Breast epithelium (tissue), 4 donors: ENCODE measurements at regions of chr12 and their contacts with region 1.

Region 1: DNA sequence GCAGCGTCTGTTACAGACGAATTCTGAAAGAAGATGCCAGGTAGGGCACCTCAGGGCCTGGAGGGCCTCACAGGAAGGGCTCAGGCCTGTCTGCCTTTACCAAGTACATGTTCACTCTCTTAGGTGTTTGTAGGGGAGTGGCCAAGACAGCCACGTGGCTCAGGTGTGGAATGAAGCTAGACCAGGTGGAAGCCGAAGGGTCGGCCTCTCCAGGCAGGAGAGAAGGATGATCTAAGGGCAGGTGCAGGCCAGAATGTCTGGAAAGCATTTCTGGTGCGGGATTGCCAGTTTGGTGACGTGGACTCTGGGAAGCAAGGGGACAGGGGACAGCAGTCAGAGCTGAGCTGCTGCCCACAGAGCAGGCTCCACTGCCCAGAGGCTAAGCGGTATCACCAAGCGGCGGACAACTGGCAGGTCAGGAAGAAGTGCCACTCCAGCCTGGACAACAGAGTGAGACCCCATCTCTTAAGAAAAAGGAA is 32.0 kb upstream of the MMP17 start:
- DNase-seq: peak in 1 of 2 donors; percentile 28
- H3K4me3 ChIP-seq: no peak overlapping the region
- H3K27ac ChIP-seq: no peak overlapping the region
- H3K4me1 ChIP-seq: no peaks in the 10 kb centered on the region
- H3K27me3 ChIP-seq: no peaks in the 10 kb centered on the region
- CTCF ChIP-seq: no peak
- POLR2A ChIP-seq: no peak

Region 2: DNA sequence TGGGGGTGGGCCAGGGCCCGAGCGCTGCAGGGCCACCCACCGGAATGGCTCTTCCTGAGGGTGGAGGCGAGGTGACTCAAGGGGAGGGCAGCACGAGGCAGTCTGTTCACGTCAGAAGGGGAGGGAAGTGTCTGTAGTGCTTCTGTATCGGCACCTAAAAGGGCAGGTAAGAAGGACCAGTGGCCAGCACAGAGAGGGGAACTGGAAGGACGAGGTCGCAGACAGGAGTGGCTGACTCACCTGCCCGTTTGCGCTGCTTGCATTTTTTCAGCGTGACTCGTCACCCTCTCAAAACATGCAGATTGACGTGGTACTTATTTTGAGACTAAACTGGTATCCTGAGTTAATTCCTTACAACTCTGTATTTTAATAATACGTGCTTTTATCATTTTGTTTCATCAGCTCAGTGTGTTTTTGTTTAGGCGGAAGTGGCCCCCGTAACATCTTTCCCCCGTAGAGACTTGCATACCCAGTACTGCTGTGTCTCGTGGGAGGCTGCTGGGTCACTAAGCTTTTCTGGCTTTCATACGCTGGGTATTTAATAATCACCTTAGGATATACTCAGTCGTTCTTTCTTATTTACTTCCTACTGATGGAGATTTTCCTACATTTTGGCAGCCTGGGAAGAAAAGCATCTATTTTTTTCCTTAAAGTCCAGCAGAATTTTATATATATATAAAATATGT is 58.9 kb before region 1 on chr12:
- intact Hi-C with region 1: no loop called
- DNase-seq: peak in 1 of 2 donors; percentile 63
- H3K4me3 ChIP-seq: no peak overlapping the region
- H3K27ac ChIP-seq: peak overlapping the region; percentile 41 to 44
- H3K4me1 ChIP-seq: no peaks in the 10 kb centered on the region
- H3K27me3 ChIP-seq: no peaks in the 10 kb centered on the region
- CTCF ChIP-seq: no peak
- POLR2A ChIP-seq: no peak

Region 3: DNA sequence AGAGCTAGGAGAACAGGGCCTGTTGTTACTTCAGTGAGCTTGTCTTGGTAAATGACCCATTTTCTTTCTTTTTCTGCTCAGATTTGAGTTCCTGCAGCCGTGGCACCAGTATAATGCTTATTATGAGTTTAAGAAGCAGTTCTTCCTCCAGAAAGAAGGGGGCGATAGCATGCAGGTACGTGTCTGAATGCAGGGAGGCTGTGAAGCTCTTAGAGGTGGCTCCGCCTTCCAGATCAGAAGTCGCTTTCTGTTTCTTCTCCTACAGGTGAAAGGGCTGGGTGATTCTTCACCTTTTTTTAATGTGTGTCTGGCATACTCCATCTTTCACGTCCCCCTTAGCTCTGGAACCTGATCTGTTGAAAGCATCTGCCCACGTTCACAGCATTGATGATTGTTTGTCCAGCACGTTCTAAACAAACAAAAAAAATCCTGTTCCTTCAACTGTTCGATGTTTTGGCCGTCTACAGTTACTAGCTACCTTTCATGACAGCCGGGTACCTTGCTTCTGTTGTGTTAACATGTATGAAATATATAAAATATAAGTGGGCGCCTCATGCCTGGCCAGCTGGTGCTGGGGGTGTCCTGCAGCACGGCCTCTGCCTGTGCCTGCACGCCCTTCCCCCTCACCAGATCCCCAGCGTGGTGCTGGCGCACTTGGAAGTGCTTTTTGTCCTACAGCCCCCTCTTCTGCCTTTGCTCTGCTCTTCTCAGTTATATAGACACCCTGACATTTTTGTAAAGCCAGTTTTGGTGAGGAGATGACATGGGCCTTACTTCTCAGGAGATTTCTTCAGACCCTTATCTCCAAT is 40.7 kb before region 1 on chr12:
- intact Hi-C with region 1: no loop called
- DNase-seq: peak in 1 of 2 donors; percentile 5
- H3K4me3 ChIP-seq: no peak overlapping the region
- H3K27ac ChIP-seq: no peak overlapping the region
- H3K4me1 ChIP-seq: no peaks in the 10 kb centered on the region
- H3K27me3 ChIP-seq: no peaks in the 10 kb centered on the region
- CTCF ChIP-seq: no peak
- POLR2A ChIP-seq: no peak

Region 4: DNA sequence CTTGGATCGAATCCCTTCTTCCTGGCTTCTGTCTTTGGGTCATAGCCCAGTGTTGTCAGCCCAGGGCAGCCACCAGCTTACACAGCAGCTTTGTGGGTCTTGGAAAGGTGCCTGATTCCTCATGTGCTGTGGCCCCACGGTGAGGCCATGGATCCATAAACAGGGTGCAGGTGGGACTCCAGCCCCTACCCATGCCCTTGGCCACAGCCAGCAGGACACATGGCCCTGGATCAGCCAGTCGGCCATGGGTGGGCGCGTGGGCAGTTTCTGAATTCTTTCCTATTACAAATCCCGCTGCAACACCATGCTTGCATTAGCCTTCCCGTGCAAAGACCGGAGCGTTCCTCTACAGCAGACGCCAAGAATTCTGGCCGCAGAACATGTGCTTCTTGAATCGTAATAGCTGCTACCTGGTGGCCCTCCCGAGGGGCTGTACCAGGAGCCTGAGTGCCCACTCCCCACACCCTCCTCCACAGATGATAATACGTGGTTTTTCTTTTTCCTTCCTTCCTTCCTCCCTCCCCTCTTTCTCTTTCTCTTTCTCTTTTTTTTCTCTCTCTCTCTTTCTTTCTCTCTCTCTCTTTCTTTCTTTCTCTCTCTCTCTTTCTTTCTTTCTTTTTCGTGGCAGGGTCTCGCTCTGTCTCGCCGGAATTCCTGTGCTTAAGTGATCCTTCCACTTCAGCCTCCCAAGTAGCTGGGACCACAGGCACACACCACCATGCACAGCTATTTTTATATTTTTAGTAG is 29.1 kb after region 1 on chr12:
- intact Hi-C with region 1: loop called (anchors 2 kb)
- DNase-seq: no peak
- H3K4me3 ChIP-seq: peak overlapping the region in 2 of 3 donors; percentile 20 to 50
- H3K27ac ChIP-seq: no peak overlapping the region
- H3K4me1 ChIP-seq: peaks cover 2 to 16% of the 10 kb centered on the region in 2 donors
- H3K27me3 ChIP-seq: no peaks in the 10 kb centered on the region
- CTCF ChIP-seq: no peak
- POLR2A ChIP-seq: no peak